Left colon (tissue), 2 donors: ENCODE measurements at regions of chr14 and their contacts with region 1.

Region 1: GRCh38 chr14:100645192-100645990 is 58.2 kb upstream of the BEGAIN start:
- DNase-seq: peak; percentile 91 to 97
- ATAC-seq: peak; percentile 79

Region 2: GRCh38 chr14:100400115-100400514 is 245.3 kb before region 1 on chr14:
- intact Hi-C with region 1: loop called in 1 of 2 experiments (anchors 5 kb)
- DNase-seq: peak in 1 of 2 donors; percentile 64
- ATAC-seq: peak; percentile 38

Region 3: DNA sequence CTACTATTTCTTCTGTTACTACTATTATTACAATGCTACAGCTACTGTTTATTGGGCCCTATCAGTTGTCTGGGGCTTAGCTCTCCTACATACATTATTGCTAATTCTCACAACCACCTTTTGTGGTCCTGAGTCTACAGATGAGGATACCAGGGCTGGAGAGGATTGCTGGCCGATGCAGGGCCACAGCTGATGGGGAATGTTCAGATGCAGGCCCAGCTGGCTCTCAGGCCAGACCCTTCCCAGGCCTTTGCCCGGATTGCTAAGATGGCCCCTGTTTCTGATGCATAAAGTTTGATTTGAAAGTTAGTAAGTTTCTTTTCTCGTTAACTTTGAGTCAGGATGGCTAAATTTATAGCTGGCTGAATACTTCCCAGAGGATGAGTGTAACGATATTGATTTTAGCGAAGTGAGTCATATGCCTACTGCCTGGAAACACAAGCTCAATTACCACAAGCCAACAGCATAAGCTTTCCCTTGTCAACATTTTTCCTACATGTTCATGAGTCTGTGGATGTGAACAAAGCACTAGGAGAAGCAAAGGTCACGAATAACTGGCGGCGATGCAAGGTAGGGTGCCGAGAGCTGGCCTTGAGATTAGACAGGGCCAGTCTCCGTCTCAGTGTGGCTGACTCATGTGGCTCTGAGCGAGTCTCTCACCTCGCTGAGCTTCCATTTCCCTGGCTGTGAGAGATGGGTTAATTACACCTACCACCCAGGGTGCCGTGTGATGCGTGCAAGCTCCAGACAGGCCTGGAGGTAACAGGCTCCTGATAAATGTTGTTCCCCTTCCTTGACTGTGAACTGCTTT is 169.2 kb before region 1 on chr14:
- intact Hi-C with region 1: no loop called
- DNase-seq: peak; percentile 20 to 41
- ATAC-seq: peak; percentile 91

Region 4: GRCh38 chr14:100726550-100727085 is 81.2 kb after region 1 on chr14 and contains the start of gene DLK1:
- intact Hi-C with region 1: no loop called
- DNase-seq: no peak
- ATAC-seq: no peak
- total RNA-seq, gene DLK1: not detected